Mammary epithelial cell (primary cell): ENCODE measurements at regions of chr4 and their contacts with region 1.

Region 1: GRCh38 chr4:37594108-37594507 is 92.1 kb downstream of the RELL1 start:
- DNase-seq: no peak
- H3K4me3 ChIP-seq: no peak overlapping the region
- H3K27ac ChIP-seq: no peak overlapping the region
- H3K4me1 ChIP-seq: no peaks in the 10 kb centered on the region
- H3K27me3 ChIP-seq: no peaks in the 10 kb centered on the region
- CTCF ChIP-seq: peak in 1 of 2 donors; percentile 3

Region 2: GRCh38 chr4:37780444-37781150 is 186.5 kb after region 1 on chr4:
- CTCF ChIA-PET with region 1: no interaction called
- dilution Hi-C with region 1: no loop called
- in situ Hi-C with region 1: loop called (anchors 5 to 10 kb)
- intact Hi-C with region 1: no loop called
- DNase-seq: no peak
- H3K4me3 ChIP-seq: no peak overlapping the region
- H3K27ac ChIP-seq: no peak overlapping the region
- H3K4me1 ChIP-seq: no peaks in the 10 kb centered on the region
- H3K27me3 ChIP-seq: no peaks in the 10 kb centered on the region
- CTCF ChIP-seq: peak in 1 of 2 donors; percentile 27

Region 3: DNA sequence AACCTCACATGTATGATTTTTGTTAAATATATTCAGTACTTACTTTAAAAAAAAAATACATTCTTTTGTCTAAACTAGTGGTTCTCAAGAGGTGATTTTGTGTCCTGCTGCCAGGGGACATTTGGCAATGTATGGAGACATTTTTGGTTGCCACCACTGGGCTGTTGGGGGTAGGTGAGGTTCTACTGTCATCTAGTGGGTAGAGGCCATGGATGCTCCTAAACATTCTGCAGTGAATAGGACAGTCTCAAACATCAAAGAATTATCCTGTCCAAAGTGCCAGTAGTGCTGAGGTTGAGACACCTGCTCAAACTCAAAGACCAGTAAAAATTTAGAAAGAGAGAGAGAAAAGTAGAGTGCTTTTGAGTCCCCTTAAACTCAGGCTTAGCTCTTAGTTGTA is 199.5 kb after region 1 on chr4:
- CTCF ChIA-PET with region 1: no interaction called
- dilution Hi-C with region 1: no loop called
- in situ Hi-C with region 1: loop called (anchors 5 to 10 kb)
- intact Hi-C with region 1: no loop called
- DNase-seq: peak; percentile 3
- H3K4me3 ChIP-seq: no peak overlapping the region
- H3K27ac ChIP-seq: no peak overlapping the region
- H3K4me1 ChIP-seq: no peaks in the 10 kb centered on the region
- H3K27me3 ChIP-seq: peaks cover 3% of the 10 kb centered on the region
- CTCF ChIP-seq: peak; percentile 57 to 91